Activated CD4-positive, alpha-beta memory T cell treated with anti-CD3 and anti-CD28 coated beads for 36 hours (primary cell): ENCODE measurements at regions of chr1 and their contacts with region 1.

Region 1: GRCh38 chr1:155017041-155017945 is 14.7 kb downstream of the ZBTB7B start:
- DNase-seq: peak; percentile 97
- H3K4me3 Mint-ChIP-seq: peak overlapping the region; percentile 37
- H3K27ac Mint-ChIP-seq: peak overlapping the region; percentile 78
- H3K4me1 Mint-ChIP-seq: peaks cover 63% of the 10 kb centered on the region
- H3K27me3 Mint-ChIP-seq: no peaks in the 10 kb centered on the region

Region 2: DNA sequence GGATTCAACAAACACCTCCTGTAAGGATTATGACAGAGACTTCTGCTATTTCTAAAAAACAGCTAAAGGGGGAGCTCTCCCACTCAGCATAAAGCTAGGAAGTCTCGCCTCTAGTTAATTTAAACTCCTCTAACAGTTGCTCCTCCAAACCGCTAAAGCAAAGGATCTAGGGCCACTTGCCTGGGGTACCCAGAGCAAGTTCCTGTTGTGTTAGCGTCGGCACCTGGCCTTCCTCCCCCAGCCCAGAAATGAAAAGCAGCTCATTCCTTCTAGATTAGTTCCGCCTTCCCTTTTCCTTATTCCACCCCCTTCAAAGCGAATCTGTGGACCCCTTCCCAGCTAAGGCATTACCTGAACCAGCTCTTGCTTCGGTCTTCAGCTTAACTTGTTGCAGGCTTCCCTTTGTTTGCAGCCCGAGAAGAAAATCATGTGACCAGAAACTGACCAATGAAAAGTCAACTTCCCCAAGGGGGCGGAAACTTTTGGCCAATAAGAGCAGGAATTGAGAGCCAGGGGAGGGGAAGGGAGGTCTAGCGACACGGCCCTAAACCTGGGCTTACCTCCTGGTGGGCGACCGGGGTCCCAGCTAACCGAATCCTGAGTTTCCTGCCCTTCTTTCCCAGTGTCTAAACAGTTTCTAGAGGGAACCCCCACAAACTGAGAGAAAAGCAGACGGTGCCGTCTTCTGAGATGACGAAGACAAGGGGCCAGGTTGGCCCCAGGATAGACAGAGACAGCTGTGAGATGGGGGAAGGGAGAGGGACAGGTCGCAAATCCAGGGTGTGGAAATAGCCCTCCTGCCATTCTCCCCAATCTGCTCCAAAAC is 61.4 kb before region 1 on chr1 and contains the start of gene PBXIP1:
- CTCF ChIA-PET with region 1: interaction called, 35 read pairs
- POLR2A ChIA-PET with region 1: interaction called, 8 read pairs
- intact Hi-C with region 1: no loop called
- DNase-seq: peak; percentile 89
- H3K4me3 Mint-ChIP-seq: peak within 1 kb of the TSS; percentile 92
- H3K27ac Mint-ChIP-seq: peak within 1 kb of the TSS; percentile 97
- H3K4me1 Mint-ChIP-seq: peaks cover 75% of the 10 kb centered on the region
- H3K27me3 Mint-ChIP-seq: no peaks in the 10 kb centered on the region
- total RNA-seq, gene PBXIP1: 55.9 to 57.3 TPM

Region 3: GRCh38 chr1:154961497-154962262 is 55.6 kb before region 1 on chr1 and contains the start of gene PYGO2:
- CTCF ChIA-PET with region 1: interaction called, 35 read pairs
- POLR2A ChIA-PET with region 1: interaction called, 8 read pairs
- intact Hi-C with region 1: loop called (anchors 1 kb)
- DNase-seq: peak; percentile 88
- H3K4me3 Mint-ChIP-seq: peak within 1 kb of the TSS; percentile 96
- H3K27ac Mint-ChIP-seq: peak within 1 kb of the TSS; percentile 92
- H3K4me1 Mint-ChIP-seq: peaks cover 36% of the 10 kb centered on the region
- H3K27me3 Mint-ChIP-seq: no peaks in the 10 kb centered on the region
- total RNA-seq, gene PYGO2: 31.5 to 32.4 TPM

Region 4: GRCh38 chr1:154974063-154974807 is 43.1 kb before region 1 on chr1 and contains the start of gene CKS1B:
- CTCF ChIA-PET with region 1: interaction called, 21 read pairs
- POLR2A ChIA-PET with region 1: interaction called, 6 read pairs
- intact Hi-C with region 1: no loop called
- DNase-seq: peak; percentile 98
- H3K4me3 Mint-ChIP-seq: no peak within 1 kb of the TSS
- H3K27ac Mint-ChIP-seq: no peak within 1 kb of the TSS
- H3K4me1 Mint-ChIP-seq: peaks cover 30% of the 10 kb centered on the region
- H3K27me3 Mint-ChIP-seq: no peaks in the 10 kb centered on the region
- total RNA-seq, gene CKS1B: 197 to 205 TPM

Region 5: DNA sequence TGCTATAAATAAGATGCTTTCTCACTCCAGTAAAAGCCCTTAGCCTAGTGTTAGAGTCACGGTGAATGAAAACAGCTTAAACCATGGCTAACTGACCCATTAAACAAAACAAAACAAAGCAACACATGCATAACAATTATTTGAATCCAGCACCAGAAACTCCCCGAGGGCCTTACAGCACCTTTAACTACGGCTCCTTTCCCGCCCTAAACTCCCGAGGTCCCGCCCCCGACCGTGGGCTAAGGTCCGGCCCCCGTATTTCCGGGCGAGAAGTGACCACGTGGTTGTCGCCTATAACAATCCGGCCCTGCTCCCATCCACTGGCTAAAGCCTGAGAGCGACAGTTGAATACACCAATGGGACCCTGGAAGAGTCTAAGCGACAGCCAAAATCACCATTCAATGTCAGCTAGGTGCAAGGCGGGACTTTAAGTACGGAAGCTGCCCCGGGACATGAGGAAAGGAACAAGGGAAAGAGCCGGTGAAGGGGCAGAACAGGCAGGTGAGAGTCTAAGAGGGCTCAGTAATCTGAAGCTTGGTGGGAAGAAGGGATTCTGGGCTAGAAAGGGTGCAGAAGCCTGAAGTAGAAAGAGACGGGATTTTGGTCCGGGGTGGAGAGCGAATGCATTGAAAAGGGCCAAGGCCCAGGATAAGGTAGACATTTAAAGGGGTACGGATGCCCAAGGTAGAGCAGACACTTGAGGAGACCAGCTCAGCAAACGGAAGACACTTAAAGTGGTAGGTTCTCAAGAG is 34.2 kb before region 1 on chr1 and contains the start of gene FLAD1:
- CTCF ChIA-PET with region 1: interaction called, 39 read pairs
- POLR2A ChIA-PET with region 1: interaction called, 10 read pairs
- intact Hi-C with region 1: loop called (anchors 1 kb)
- DNase-seq: peak; percentile 98
- H3K4me3 Mint-ChIP-seq: no peak within 1 kb of the TSS
- H3K27ac Mint-ChIP-seq: no peak within 1 kb of the TSS
- H3K4me1 Mint-ChIP-seq: peaks cover 14% of the 10 kb centered on the region
- H3K27me3 Mint-ChIP-seq: no peaks in the 10 kb centered on the region
- total RNA-seq, gene FLAD1: 45.4 to 49.4 TPM

Region 6: GRCh38 chr1:154992721-154993571 is 24.3 kb before region 1 on chr1:
- CTCF ChIA-PET with region 1: interaction called, 144 read pairs
- POLR2A ChIA-PET with region 1: interaction called, 35 read pairs
- intact Hi-C with region 1: no loop called
- DNase-seq: no peak
- H3K4me3 Mint-ChIP-seq: no peak overlapping the region
- H3K27ac Mint-ChIP-seq: no peak overlapping the region
- H3K4me1 Mint-ChIP-seq: peaks cover 21% of the 10 kb centered on the region
- H3K27me3 Mint-ChIP-seq: no peaks in the 10 kb centered on the region

Region 7: GRCh38 chr1:155038602-155039307 is 21.5 kb after region 1 on chr1:
- CTCF ChIA-PET with region 1: interaction called, 14 read pairs
- POLR2A ChIA-PET with region 1: interaction called, 3 read pairs
- intact Hi-C with region 1: no loop called
- DNase-seq: no peak
- H3K4me3 Mint-ChIP-seq: no peak overlapping the region
- H3K27ac Mint-ChIP-seq: no peak overlapping the region
- H3K4me1 Mint-ChIP-seq: no peaks in the 10 kb centered on the region
- H3K27me3 Mint-ChIP-seq: peaks cover 2% of the 10 kb centered on the region

Region 8: GRCh38 chr1:155257361-155257760 is 240.1 kb after region 1 on chr1:
- CTCF ChIA-PET with region 1: no interaction called
- POLR2A ChIA-PET with region 1: no interaction called
- intact Hi-C with region 1: no loop called
- DNase-seq: no peak
- H3K4me3 Mint-ChIP-seq: no peak overlapping the region
- H3K27ac Mint-ChIP-seq: no peak overlapping the region
- H3K4me1 Mint-ChIP-seq: peaks cover 38% of the 10 kb centered on the region
- H3K27me3 Mint-ChIP-seq: no peaks in the 10 kb centered on the region